Activated naive CD4-positive, alpha-beta T cell treated with anti-CD3 and anti-CD28 coated beads for 36 hours (primary cell): ENCODE measurements at regions of chr1 and their contacts with region 1.

Region 1: GRCh38 chr1:244801246-244801645 is 34.2 kb upstream of the COX20 start:
- DNase-seq: peak; percentile 74
- H3K4me3 Mint-ChIP-seq: no peak overlapping the region
- H3K27ac Mint-ChIP-seq: no peak overlapping the region
- H3K4me1 Mint-ChIP-seq: peaks cover 2% of the 10 kb centered on the region
- H3K27me3 Mint-ChIP-seq: no peaks in the 10 kb centered on the region

Region 2: GRCh38 chr1:244652699-244653466 is 148.4 kb before region 1 on chr1 and contains the start of gene DESI2:
- CTCF ChIA-PET with region 1: interaction called, 7 read pairs
- intact Hi-C with region 1: loop called (anchors 2 kb)
- DNase-seq: peak; percentile 99
- H3K4me3 Mint-ChIP-seq: peak within 1 kb of the TSS; percentile 82
- H3K27ac Mint-ChIP-seq: peak within 1 kb of the TSS; percentile 88
- H3K4me1 Mint-ChIP-seq: peaks cover 18% of the 10 kb centered on the region
- H3K27me3 Mint-ChIP-seq: no peaks in the 10 kb centered on the region
- total RNA-seq, gene DESI2: 31.7 to 32.5 TPM

Region 3: GRCh38 chr1:244730153-244730933 is 70.9 kb before region 1 on chr1:
- CTCF ChIA-PET with region 1: interaction called, 6 read pairs
- intact Hi-C with region 1: loop called (anchors 2 kb)
- DNase-seq: peak; percentile 36
- H3K4me3 Mint-ChIP-seq: peak overlapping the region; percentile 78
- H3K27ac Mint-ChIP-seq: no peak overlapping the region
- H3K4me1 Mint-ChIP-seq: peaks cover 9% of the 10 kb centered on the region
- H3K27me3 Mint-ChIP-seq: peaks cover 22% of the 10 kb centered on the region

Region 4: GRCh38 chr1:244835276-244836134 is 34.3 kb after region 1 on chr1 and contains the start of gene COX20:
- CTCF ChIA-PET with region 1: interaction called, 6 read pairs
- intact Hi-C with region 1: loop called (anchors 1 kb)
- DNase-seq: peak; percentile 85
- H3K4me3 Mint-ChIP-seq: peak within 1 kb of the TSS; percentile 94
- H3K27ac Mint-ChIP-seq: peak within 1 kb of the TSS; percentile 99
- H3K4me1 Mint-ChIP-seq: peaks cover 38% of the 10 kb centered on the region
- H3K27me3 Mint-ChIP-seq: no peaks in the 10 kb centered on the region
- total RNA-seq, gene COX20: 21.4 to 24.2 TPM

Region 5: GRCh38 chr1:245051349-245052221 is 250.3 kb after region 1 on chr1:
- CTCF ChIA-PET with region 1: interaction called, 23 read pairs
- intact Hi-C with region 1: no loop called
- DNase-seq: peak; percentile 65
- H3K4me3 Mint-ChIP-seq: peak overlapping the region; percentile 40
- H3K27ac Mint-ChIP-seq: no peak overlapping the region
- H3K4me1 Mint-ChIP-seq: peaks cover 16% of the 10 kb centered on the region
- H3K27me3 Mint-ChIP-seq: peaks cover 6% of the 10 kb centered on the region